Transverse colon (tissue), 4 donors: ENCODE measurements at regions of chr17 and their contacts with region 1.

Region 1: GRCh38 chr17:33786478-33786877 is 468.6 kb upstream of the CCL2 start:
- DNase-seq: no peak
- H3K4me3 ChIP-seq: no peak overlapping the region
- H3K27ac ChIP-seq: no peak overlapping the region
- H3K4me1 ChIP-seq: no peaks in the 10 kb centered on the region
- H3K27me3 ChIP-seq: peaks cover 7% of the 10 kb centered on the region
- CTCF ChIP-seq: no peak
- EP300 ChIP-seq: no peak
- POLR2A ChIP-seq: no peak

Region 2: DNA sequence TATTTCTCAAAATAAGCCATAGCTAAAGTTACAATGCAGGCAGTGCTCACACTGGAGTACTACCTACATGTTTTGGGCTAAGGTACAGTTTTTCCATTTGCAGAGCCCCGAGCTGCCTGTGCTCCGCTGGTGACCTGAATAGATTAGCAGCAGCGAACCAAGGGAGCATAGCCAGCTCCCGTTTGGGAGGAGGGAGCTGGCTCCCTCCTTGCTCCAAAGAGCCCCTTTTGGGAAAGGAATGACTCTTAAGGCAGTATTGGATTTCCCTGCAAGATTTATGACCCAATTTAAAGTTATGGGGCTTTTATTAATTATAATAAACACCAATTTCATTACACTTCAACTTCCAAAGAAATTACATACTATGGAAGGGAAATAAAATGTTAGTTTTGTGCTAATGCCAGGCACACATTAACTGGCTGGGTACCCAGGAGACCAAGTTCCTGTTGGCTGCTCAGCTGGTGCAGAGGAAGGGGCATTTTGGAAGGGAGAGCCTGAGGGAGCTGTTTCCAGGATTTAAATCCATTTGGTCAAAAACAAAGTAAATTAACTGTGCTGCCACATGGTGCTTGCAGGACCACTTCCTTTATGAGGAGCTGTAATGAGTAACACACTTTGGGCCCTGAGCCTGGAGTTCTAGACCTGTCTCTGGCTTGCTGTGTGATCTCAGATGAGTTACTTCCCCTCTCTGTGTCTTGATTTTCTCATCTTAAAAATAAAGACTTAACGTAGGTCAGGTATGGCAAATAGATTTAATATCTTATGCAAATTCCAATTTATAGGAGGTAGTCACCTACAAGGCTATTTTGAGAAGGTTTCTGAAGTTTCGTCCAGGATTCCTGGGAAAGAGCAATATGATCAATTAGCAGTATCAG is 106.5 kb after region 1 on chr17:
- in situ Hi-C with region 1: no loop called
- intact Hi-C with region 1: no loop called
- DNase-seq: no peak
- H3K4me3 ChIP-seq: no peak overlapping the region
- H3K27ac ChIP-seq: no peak overlapping the region
- H3K4me1 ChIP-seq: no peaks in the 10 kb centered on the region
- H3K27me3 ChIP-seq: peaks cover 4% of the 10 kb centered on the region
- CTCF ChIP-seq: no peak
- EP300 ChIP-seq: no peak
- POLR2A ChIP-seq: no peak

Region 3: DNA sequence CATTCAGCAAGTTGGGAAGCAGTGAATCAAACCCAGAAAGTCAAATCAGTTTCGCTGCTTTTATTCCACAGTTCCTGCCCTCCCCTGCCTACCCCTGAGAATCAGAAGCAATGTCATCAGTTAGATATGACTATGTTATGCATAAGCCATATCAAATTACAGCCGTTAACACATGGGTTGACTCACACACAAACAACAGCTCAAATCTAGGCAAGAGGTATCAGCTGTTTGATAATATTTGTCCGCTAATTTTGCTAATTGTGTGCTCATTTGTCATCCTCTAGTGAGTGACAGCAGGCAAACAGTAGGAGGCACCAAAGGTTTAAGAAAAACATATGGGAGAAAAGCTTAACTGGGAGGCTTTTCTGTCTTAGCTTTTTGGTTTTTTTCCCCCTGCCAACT is 141.3 kb after region 1 on chr17:
- in situ Hi-C with region 1: no loop called
- intact Hi-C with region 1: no loop called
- DNase-seq: no peak
- H3K4me3 ChIP-seq: no peak overlapping the region
- H3K27ac ChIP-seq: no peak overlapping the region
- H3K4me1 ChIP-seq: no peaks in the 10 kb centered on the region
- H3K27me3 ChIP-seq: no peaks in the 10 kb centered on the region
- CTCF ChIP-seq: peak in 3 of 5 experiments; percentile 24 to 40 (median 25)
- EP300 ChIP-seq: no peak
- POLR2A ChIP-seq: no peak

Region 4: DNA sequence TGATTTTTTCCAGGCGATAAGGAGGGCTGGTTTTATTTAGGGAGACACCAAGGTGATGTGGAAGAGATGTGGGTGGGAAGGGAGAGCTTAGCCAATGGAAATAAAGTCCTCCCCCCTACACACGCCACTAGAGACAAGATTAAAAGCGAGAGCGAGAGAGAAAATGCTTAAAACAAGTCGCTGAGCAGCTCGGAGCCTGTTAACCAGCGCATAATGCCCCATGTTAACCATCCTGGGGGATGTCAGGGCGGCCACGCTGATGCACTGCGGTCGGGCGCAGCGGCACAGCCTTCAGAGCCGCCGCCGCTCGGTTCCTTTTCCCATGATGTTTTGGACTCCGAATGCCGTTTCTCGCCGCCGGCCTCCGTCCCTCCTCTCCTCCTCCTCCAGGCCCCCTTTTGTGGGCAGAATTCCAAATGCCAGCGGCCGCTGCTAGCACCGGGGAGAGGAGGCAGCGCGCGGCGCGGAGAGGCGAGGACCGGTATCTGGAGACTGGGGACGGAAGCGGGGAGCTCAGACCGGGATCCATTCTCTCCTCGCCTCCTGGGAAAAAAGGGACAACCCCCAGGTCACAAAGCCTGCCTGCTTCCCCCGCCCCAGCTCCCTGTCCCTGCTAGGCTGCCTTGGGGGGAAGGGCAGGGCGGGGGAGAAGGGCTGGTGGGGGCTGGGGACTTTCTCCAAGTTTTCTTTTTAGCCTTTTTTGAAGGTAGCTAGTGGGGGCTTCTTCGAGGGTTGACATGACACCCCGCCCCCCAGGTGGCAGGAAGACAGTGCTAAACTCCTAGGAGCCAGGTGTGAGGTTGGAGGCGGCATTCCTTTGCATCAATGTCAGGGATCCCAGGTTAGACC is 370.5 kb after region 1 on chr17:
- in situ Hi-C with region 1: loop called in 1 of 4 experiments (anchors 10 kb)
- intact Hi-C with region 1: no loop called
- DNase-seq: no peak
- H3K4me3 ChIP-seq: no peak overlapping the region
- H3K27ac ChIP-seq: no peak overlapping the region
- H3K4me1 ChIP-seq: peaks cover 0 to 4% (median 0%) of the 10 kb centered on the region in 4 donors
- H3K27me3 ChIP-seq: peaks cover 64% of the 10 kb centered on the region
- CTCF ChIP-seq: no peak
- EP300 ChIP-seq: no peak
- POLR2A ChIP-seq: no peak